Ascending aorta (tissue), 2 donors: ENCODE measurements at regions of chr2 and their contacts with region 1.

Region 1: GRCh38 chr2:68467077-68467960 is at the starts of genes APLF and FBXO48:
- DNase-seq: peak; percentile 96 to 99
- H3K4me3 ChIP-seq: peak within 1 kb of the TSS; percentile 75 to 81
- H3K27ac ChIP-seq: peak within 1 kb of the TSS; percentile 61 to 91
- H3K4me1 ChIP-seq: peaks cover 0 to 3% of the 10 kb centered on the region in 2 donors
- H3K27me3 ChIP-seq: no peaks in the 10 kb centered on the region
- CTCF ChIP-seq: no peak
- total RNA-seq, gene APLF: 2.8 TPM
- total RNA-seq, gene FBXO48: 1.2 TPM

Region 2: DNA sequence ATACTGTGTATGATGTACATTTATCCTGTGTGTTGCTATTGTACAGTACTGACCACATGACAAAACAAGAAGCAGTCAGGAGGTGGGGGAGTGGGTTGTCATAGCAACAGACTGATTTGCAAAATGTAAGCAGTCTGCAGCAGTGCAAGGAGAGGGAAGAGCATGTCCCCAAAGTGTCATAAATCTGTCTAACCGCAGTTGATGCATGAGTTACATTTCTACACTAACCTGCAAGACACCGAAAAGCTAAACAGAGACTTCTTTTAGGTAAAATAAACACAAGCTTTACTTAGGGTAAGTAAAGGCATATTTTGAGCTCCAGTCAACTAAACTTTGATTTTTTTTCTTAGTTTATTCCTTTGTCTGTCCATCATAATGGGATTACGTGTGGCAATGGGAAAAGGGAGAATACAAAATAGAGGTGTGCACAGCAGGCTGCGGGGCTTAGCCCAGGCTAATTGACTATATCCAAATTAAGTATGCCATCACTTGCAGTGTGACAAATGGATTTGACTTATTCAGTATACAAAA is 1897.9 kb before region 1 on chr2:
- intact Hi-C with region 1: loop called (anchors 10 kb)
- DNase-seq: no peak
- H3K4me3 ChIP-seq: no peak overlapping the region
- H3K27ac ChIP-seq: no peak overlapping the region
- H3K4me1 ChIP-seq: peaks cover 0 to 12% of the 10 kb centered on the region in 2 donors
- H3K27me3 ChIP-seq: no peaks in the 10 kb centered on the region
- CTCF ChIP-seq: no peak

Region 3: DNA sequence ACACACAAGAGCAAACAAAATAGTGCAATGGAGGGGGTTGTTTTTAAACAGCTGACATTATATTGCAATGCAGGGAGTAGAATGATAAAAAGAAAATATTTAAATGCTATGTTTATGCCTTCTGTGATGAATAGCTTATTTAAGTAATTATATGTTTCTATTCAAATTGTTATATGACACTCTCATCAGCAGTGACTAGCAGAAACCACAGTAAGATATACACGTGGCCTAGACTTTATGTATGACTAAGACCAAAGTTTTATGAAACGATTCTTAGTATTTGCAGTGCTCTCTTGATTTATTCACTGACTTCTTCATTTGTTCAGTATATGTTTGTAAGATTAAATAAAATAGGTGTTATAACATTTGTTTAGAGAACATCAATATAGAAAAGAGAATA is 378.4 kb before region 1 on chr2:
- intact Hi-C with region 1: no loop called
- DNase-seq: no peak
- H3K4me3 ChIP-seq: no peak overlapping the region
- H3K27ac ChIP-seq: no peak overlapping the region
- H3K4me1 ChIP-seq: no peaks in the 10 kb centered on the region
- H3K27me3 ChIP-seq: no peaks in the 10 kb centered on the region
- CTCF ChIP-seq: no peak

Region 4: DNA sequence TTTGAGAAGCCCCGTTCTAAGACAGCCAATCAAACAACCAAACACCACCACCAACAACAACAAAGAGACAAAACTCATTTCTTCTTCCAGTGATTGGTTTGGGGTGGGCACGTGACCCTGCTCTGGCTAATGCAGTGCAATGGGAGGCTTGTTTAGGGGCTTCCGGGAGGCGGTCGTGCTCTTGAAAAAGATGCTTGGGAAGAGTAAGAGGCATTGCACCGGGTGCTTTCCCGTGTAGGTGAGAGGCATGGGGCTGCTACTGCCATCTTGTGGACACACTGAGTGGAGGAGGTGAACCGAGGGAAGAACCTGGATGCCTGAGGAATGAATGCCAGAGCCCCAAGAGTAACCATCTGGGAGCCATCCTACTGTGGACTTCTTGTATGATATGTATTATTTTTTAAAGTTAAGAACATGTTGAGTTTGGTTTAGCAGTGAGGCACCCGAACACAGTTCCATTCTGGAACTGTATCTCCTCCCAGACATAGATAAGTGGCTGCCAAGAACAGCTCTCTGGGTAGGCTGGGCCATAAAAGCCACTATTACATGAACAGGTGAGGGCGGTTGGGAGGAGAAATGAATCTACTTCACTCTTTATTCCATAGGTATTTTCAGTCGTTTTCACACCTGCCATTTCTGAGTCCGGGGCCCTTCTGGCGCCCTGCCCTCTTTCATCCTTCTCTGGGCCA is 248.2 kb after region 1 on chr2:
- intact Hi-C with region 1: loop called (anchors 2 kb)
- DNase-seq: no peak
- H3K4me3 ChIP-seq: no peak overlapping the region
- H3K27ac ChIP-seq: no peak overlapping the region
- H3K4me1 ChIP-seq: no peaks in the 10 kb centered on the region
- H3K27me3 ChIP-seq: no peaks in the 10 kb centered on the region
- CTCF ChIP-seq: peak in 2 of 3 experiments; percentile 36 to 55

Region 5: DNA sequence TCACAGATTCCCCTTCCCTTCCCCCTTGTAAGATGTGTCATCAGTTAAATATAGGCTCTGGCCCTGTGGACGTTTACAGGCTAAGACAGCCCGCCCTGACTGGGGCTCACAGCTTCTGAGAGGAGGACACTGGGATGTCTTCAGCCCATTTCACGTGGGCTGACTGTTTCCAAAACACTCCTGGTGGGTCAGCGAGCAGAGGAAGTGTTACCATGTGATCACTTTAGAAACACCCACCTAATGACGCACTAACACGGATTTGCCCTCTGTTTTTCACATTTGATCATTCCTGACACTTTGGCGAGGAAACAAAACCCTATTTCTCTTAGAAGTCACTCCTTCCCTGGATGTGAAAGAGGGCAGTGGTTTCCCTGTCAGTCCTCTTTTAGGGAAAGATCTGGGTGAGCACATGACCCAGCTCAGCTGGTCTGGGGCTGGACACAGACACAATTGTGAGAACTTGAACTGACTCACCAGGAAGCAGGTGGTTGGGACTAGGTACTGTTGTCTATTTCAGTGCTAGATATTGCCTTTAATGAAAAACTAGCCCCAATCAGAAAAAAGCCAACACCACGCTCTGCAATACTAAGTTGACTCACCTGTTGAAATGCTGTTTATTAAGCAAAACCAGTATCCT is 365.0 kb after region 1 on chr2:
- intact Hi-C with region 1: loop called (anchors 1 kb)
- DNase-seq: peak; percentile 70 to 94
- H3K4me3 ChIP-seq: no peak overlapping the region
- H3K27ac ChIP-seq: peak overlapping the region; percentile 95 to 97
- H3K4me1 ChIP-seq: peaks cover 28 to 45% of the 10 kb centered on the region in 2 donors
- H3K27me3 ChIP-seq: no peaks in the 10 kb centered on the region
- CTCF ChIP-seq: no peak

Region 6: DNA sequence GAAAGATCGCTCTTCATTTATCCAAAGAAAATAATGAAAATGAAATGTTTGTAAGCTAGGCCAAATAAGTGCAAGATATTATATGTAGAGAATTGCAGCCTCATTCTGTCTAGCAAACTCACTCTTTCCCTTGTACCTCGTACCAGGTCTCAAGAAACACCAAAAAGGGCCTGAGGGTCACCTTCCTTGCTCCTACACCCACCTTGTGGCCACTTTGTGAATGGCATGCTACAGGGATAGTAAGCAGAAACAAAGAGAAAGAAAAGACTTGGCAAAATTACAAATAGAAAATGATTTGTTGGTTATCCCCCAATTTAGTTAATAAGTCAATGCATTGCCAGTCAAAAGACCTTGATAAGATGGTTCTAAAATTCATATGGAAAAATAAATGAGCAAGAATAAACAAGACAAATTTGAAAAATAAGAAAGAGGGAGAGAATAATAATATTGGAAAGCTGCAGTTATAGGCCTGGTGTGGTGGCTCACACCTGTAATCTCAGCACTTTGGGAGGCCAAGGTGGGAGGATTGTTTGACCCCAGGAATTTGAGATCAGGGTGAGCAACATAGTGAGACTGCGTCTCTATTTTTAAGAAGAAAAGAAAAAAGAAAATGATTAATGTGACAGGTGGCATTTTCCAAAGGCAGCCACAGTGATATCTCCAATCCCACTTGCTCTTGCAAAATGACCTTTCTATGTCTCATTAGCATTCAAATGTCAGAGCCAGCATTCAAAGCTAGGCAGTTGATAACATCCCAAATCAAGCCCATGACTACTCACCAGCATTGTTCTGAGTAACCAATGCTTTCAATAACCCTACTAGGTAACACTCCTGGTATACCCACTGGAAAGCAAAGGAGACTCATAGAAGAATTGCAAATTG is 442.7 kb after region 1 on chr2:
- intact Hi-C with region 1: loop called (anchors 5 kb)
- DNase-seq: peak in 1 of 2 donors; percentile 86
- H3K4me3 ChIP-seq: no peak overlapping the region
- H3K27ac ChIP-seq: no peak overlapping the region
- H3K4me1 ChIP-seq: peaks cover 3 to 12% of the 10 kb centered on the region in 2 donors
- H3K27me3 ChIP-seq: no peaks in the 10 kb centered on the region
- CTCF ChIP-seq: peak; percentile 70 to 94 (median 89)

Region 7: GRCh38 chr2:68925295-68925896 is 458.1 kb after region 1 on chr2:
- intact Hi-C with region 1: loop called (anchors 2 kb)
- DNase-seq: no peak
- H3K4me3 ChIP-seq: no peak overlapping the region
- H3K27ac ChIP-seq: no peak overlapping the region
- H3K4me1 ChIP-seq: no peaks in the 10 kb centered on the region
- H3K27me3 ChIP-seq: no peaks in the 10 kb centered on the region
- CTCF ChIP-seq: peak; percentile 77 to 91 (median 83)